SK-N-SH (cell line): ENCODE measurements at regions of chr6 and their contacts with region 1.

Region 1: GRCh38 chr6:82712852-82713251 is 349.2 kb downstream of the TPBG start:
- DNase-seq: peak; percentile 12
- H3K4me3 ChIP-seq: no peak overlapping the region; a peak in 1 of 4 replicates
- H3K27ac ChIP-seq: no peak overlapping the region
- H3K4me1 ChIP-seq: peaks cover 0 to 6% of the 10 kb centered on the region in 2 experiments; a peak in 2 of 4 replicates
- H3K27me3 ChIP-seq: no peaks in the 10 kb centered on the region
- CTCF ChIP-seq: peak; percentile 54
- EP300 ChIP-seq: no peak
- RAD21 ChIP-seq: peak; percentile 59

Region 2: DNA sequence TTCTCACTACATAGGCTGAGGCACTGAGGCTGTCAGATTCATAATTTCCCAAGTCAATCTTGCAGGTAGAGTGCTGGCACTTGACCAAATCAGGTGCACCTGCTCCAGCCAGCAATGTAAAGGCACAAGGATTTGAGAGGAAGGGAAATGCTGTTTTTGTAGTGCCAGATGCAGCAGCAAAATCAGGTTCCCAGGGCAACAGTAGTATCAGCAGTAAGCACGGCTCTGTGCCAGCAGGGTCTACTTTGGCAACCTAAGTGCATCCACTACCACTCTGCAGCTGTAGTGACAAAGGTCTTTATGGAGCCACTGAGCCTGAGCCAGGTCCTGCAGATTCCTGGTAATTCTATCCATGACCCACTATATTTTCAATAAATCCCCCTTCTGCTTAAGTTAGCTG is 19.8 kb before region 1 on chr6:
- CTCF ChIA-PET with region 1: interaction called, 10 read pairs
- POLR2A ChIA-PET with region 1: no interaction called
- DNase-seq: no peak
- H3K4me3 ChIP-seq: no peak overlapping the region
- H3K27ac ChIP-seq: no peak overlapping the region
- H3K4me1 ChIP-seq: peaks cover 0 to 3% of the 10 kb centered on the region in 2 experiments; a peak in 2 of 4 replicates
- H3K27me3 ChIP-seq: no peaks in the 10 kb centered on the region
- CTCF ChIP-seq: no peak
- EP300 ChIP-seq: no peak
- RAD21 ChIP-seq: no peak

Region 3: DNA sequence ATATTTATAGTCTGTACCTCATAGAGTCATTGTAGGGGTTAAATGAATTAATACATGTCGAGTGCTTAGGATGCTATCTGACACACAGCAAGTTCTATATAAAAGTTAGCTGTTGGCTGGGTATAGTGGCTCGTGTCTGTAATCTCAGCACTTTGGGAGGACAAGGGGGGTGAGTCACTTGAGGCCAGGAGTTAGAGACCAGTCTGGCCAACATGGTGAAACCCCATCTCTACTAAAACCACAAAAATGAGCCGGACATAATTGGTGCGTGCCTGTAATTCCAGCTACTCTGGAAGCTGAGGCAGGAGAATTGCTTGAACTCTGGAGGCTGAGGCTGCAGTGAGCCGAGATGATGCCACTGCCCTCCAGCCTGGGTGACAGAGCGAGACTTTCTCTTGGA is 129.9 kb after region 1 on chr6:
- CTCF ChIA-PET with region 1: no interaction called
- POLR2A ChIA-PET with region 1: no interaction called
- DNase-seq: no peak
- H3K4me3 ChIP-seq: no peak overlapping the region
- H3K27ac ChIP-seq: no peak overlapping the region
- H3K4me1 ChIP-seq: peaks cover 0 to 4% of the 10 kb centered on the region in 2 experiments; a peak in 1 of 4 replicates
- H3K27me3 ChIP-seq: no peaks in the 10 kb centered on the region
- CTCF ChIP-seq: no peak
- EP300 ChIP-seq: peak in 1 of 2 experiments; percentile 39; a peak in 1 of 4 replicates
- RAD21 ChIP-seq: no peak